Activated naive CD4-positive, alpha-beta T cell treated with anti-CD3 and anti-CD28 coated beads for 36 hours (primary cell): ENCODE measurements at regions of chr16 and their contacts with region 1.

Region 1: DNA sequence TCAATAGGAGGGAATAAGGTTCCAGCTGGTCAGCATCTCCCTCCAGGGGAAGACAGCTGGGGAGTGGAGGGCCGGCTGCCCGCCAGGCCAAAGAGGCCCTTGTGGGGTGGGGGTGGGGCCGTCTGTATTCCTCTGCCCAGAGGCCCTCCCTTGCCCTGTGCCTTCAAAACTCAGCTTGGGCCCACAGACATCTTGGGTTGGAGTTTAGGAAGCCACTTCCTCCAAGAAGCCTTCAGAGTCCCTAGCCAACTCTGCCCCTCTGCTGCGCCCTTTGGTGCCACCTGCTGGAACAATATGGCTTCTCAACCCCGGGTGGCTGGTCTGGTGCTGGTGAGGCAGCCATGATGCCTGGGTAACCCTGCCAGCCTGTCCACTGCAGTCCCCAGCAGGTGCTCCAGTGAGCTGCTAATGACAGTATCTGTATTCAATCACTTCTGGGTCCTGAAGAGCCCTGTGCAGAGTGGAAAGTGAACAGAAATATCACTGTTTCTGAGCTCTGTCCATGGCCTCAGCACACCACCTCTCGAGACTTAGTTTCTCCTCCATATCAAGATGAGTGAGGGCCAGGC is 16.7 kb downstream of the HSD11B2 start:
- DNase-seq: peak; percentile 90
- H3K4me3 Mint-ChIP-seq: no peak overlapping the region
- H3K27ac Mint-ChIP-seq: no peak overlapping the region
- H3K4me1 Mint-ChIP-seq: no peaks in the 10 kb centered on the region
- H3K27me3 Mint-ChIP-seq: no peaks in the 10 kb centered on the region

Region 2: GRCh38 chr16:67372664-67373063 is 74.9 kb before region 1 on chr16:
- CTCF ChIA-PET with region 1: interaction called, 7 read pairs
- intact Hi-C with region 1: loop called (anchors 5 kb)
- DNase-seq: no peak
- H3K4me3 Mint-ChIP-seq: no peak overlapping the region
- H3K27ac Mint-ChIP-seq: no peak overlapping the region
- H3K4me1 Mint-ChIP-seq: no peaks in the 10 kb centered on the region
- H3K27me3 Mint-ChIP-seq: peaks cover 3% of the 10 kb centered on the region

Region 3: DNA sequence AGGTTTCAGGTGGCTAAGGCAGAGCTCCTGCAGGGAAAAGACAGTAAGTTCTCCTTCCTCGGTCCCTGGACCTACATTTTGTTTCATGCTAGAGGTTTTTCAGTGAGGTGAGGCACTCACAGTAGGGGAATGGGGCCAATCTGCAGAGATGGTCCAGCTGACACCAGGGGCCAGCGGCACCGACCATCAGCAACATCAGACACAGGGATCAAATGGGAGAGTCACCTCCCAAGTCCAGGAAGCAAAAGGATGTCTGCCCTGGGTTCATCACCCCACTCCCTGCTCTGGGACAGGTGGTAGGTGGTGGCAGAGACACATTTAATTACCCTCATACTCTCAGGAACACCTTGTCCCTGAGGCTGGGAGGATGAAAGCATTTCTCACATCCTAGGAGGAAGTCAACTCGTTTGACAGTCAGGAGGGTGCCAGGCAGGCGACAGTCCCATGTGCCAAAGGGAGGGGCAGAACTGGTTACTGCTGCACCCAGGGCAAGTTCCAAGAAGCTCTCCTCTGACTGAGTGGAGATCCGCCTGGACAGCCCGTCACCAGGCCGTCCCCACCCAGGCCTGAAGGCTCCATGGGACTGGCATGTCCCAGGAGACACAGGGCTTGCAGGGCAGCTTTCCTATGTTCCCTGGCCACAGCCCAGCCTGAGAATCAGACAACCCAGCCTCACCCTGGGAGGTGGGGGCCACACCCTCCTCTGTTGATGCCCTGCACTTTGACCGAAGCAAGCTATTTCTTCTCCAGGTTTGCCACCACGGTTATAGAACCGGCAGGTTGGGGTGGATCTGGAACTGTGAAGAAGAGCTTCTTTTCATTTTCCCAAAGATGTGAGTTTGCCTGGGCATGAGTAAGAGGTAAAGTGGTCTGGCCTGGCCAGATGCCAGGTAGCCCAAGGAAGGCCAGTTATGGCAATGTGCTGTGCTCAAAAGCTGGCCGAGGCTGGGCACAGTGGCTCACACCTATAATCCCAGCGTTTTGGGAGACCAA is 14.3 kb after region 1 on chr16:
- CTCF ChIA-PET with region 1: interaction called, 37 read pairs
- intact Hi-C with region 1: no loop called
- DNase-seq: no peak
- H3K4me3 Mint-ChIP-seq: no peak overlapping the region
- H3K27ac Mint-ChIP-seq: no peak overlapping the region
- H3K4me1 Mint-ChIP-seq: peaks cover 14% of the 10 kb centered on the region
- H3K27me3 Mint-ChIP-seq: no peaks in the 10 kb centered on the region